PC-3 (cell line): ENCODE measurements at regions of chr11 and their contacts with region 1.

Region 1: DNA sequence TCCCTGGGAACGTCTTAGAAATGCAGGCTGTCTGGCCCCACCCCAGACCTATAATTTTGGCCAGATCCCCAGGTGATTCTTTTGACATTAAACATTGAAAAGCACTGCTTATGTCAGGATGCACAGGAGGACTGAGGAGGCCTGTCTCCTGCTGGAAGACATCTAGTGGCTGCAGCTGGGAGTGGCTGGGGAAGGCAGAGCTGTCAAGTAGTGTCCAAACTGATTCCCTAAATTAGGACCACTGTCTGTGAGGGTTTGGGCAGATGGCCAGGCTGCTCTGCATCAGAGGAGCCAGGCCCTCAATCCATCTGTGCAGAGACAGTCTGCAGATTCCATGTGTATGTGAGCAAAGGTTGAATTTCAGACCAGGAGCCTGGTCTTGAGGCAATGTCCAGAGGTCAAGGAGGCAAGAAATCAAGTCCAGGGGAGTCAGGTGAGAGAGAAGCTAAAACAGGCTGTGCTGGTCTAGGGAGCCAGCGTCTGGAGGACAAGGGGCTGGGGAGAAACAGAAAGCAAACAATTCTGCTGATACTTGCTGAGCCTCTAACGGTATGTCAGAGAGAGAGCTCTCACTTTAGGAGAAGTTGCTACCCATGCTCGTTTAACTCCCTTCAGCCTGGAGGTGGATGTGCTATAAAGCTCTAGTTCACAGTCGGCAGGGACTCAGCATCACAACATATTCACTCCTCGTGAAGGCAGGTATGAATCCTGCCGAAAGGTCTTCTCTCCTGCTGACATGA is 15.3 kb upstream of the SYTL2 start:
- DNase-seq: peak; percentile 78
- ATAC-seq: peak; percentile 14; the same call in 1 of the 2 replicates
- H3K4me3 ChIP-seq: no peak overlapping the region
- H3K27ac ChIP-seq: peak overlapping the region; percentile 96
- H3K4me1 ChIP-seq: peaks cover 74% of the 10 kb centered on the region
- H3K27me3 ChIP-seq: no peaks in the 10 kb centered on the region
- CTCF ChIP-seq: peak; percentile 93

Region 2: GRCh38 chr11:85664615-85665481 is 161.4 kb before region 1 on chr11 and contains the start of gene CREBZF:
- CTCF ChIA-PET with region 1: no interaction called
- POLR2A ChIA-PET with region 1: no interaction called
- intact Hi-C with region 1: loop called (anchors 1 kb)
- DNase-seq: peak; percentile 98
- ATAC-seq: peak; percentile 89
- H3K4me3 ChIP-seq: peak within 1 kb of the TSS; percentile 98
- H3K27ac ChIP-seq: peak within 1 kb of the TSS; percentile 91
- H3K4me1 ChIP-seq: peaks cover 23% of the 10 kb centered on the region
- H3K27me3 ChIP-seq: no peaks in the 10 kb centered on the region
- CTCF ChIP-seq: no peak
- total RNA-seq, gene CREBZF: 75.0 and 114 TPM in 2 replicates

Region 3: DNA sequence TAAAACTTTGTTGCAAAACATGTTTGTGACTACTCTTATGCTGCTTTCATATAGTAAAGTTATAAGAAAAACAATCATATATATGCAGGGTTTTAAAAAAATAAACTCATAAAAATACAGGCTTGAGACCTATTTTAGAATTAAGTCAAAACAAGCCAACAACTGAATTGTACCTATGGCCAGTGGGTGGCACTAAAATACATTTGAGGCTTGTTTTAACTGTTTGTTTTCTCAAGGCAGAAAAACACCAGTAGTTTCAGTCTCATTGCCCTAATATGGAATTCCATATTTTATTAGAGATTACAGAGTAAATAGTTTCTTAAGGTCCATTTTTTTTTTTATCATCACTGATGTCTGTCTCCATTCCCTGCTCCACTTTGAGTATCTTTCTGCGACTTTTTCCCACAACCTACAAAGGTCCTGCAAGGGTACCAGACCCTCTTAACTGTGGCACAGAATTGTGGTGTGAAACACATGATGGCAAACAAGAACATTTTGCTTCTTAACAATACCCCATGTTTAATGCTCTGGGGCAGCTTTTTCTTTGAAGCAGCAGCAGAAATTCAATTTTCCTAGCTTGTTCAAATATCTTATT is 131.8 kb before region 1 on chr11:
- CTCF ChIA-PET with region 1: interaction called, 4 read pairs
- POLR2A ChIA-PET with region 1: no interaction called
- intact Hi-C with region 1: loop called (anchors 1 kb)
- DNase-seq: peak; percentile 87
- ATAC-seq: peak; percentile 59
- H3K4me3 ChIP-seq: no peak overlapping the region
- H3K27ac ChIP-seq: peak overlapping the region; percentile 10; the same call in 1 of the 2 replicates
- H3K4me1 ChIP-seq: peaks cover 34% of the 10 kb centered on the region
- H3K27me3 ChIP-seq: no peaks in the 10 kb centered on the region
- CTCF ChIP-seq: peak; percentile 94

Region 4: GRCh38 chr11:85740481-85741400 is 85.5 kb before region 1 on chr11:
- CTCF ChIA-PET with region 1: no interaction called
- POLR2A ChIA-PET with region 1: interaction called, 5 read pairs
- intact Hi-C with region 1: loop called (anchors 1 kb)
- DNase-seq: peak; percentile 22
- ATAC-seq: no peak; the same call in 1 of the 2 replicates
- H3K4me3 ChIP-seq: no peak overlapping the region
- H3K27ac ChIP-seq: 0 out of 2 replicates have a peak overlapping the region, but pooled peaks have one; percentile 92
- H3K4me1 ChIP-seq: peaks cover 59% of the 10 kb centered on the region
- H3K27me3 ChIP-seq: no peaks in the 10 kb centered on the region
- CTCF ChIP-seq: no peak

Region 5: GRCh38 chr11:85810871-85811611 is 15.2 kb before region 1 on chr11 and contains the start of gene SYTL2:
- CTCF ChIA-PET with region 1: interaction called, 4 read pairs
- POLR2A ChIA-PET with region 1: no interaction called
- intact Hi-C with region 1: loop called (anchors 2 kb)
- DNase-seq: peak; percentile 85
- ATAC-seq: peak; percentile 67
- H3K4me3 ChIP-seq: peak within 1 kb of the TSS; percentile 77
- H3K27ac ChIP-seq: peak within 1 kb of the TSS; percentile 20
- H3K4me1 ChIP-seq: peaks cover 61% of the 10 kb centered on the region
- H3K27me3 ChIP-seq: no peaks in the 10 kb centered on the region
- CTCF ChIP-seq: no peak
- total RNA-seq, gene SYTL2: 51.7 and 57.1 TPM in 2 replicates

Region 6: DNA sequence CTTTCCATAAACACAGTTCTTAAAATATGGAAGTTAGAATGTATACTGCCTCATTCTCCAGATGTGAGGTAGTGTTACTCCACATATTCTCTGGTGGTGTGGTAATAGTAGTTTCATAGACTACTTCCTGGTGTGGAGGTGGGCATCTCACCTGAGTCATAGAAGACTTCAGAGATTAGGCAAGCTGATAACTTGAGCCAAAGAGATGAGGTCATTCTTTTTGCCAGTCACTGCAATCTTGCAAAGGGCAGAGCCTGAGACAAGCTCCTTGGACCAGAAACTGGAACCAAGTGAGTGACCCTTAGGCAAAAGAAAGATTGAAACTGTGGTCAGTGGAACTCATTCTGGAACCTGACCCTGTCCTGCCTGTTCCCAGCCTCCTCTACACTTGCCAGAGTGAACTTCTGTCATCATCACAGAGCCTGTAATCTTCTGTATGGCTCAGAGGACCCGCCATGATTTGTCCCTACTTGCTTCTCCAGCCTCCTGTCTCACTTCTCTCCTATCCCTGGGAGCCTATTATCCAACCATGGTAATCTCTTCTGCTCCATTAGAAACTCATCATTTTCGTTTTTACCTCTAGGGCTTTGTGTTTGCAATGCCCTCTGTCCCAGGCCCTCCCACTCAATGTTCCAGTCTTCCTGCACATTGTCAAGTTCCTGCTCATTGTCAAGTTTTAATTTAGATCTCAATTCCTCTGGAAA is 18.3 kb after region 1 on chr11:
- CTCF ChIA-PET with region 1: interaction called, 4 read pairs
- POLR2A ChIA-PET with region 1: no interaction called
- intact Hi-C with region 1: loop called (anchors 2 kb)
- DNase-seq: peak; percentile 95
- ATAC-seq: peak; percentile 83
- H3K4me3 ChIP-seq: no peak overlapping the region
- H3K27ac ChIP-seq: peak overlapping the region; percentile 84
- H3K4me1 ChIP-seq: peaks cover 36% of the 10 kb centered on the region
- H3K27me3 ChIP-seq: no peaks in the 10 kb centered on the region
- CTCF ChIP-seq: no peak

Region 7: DNA sequence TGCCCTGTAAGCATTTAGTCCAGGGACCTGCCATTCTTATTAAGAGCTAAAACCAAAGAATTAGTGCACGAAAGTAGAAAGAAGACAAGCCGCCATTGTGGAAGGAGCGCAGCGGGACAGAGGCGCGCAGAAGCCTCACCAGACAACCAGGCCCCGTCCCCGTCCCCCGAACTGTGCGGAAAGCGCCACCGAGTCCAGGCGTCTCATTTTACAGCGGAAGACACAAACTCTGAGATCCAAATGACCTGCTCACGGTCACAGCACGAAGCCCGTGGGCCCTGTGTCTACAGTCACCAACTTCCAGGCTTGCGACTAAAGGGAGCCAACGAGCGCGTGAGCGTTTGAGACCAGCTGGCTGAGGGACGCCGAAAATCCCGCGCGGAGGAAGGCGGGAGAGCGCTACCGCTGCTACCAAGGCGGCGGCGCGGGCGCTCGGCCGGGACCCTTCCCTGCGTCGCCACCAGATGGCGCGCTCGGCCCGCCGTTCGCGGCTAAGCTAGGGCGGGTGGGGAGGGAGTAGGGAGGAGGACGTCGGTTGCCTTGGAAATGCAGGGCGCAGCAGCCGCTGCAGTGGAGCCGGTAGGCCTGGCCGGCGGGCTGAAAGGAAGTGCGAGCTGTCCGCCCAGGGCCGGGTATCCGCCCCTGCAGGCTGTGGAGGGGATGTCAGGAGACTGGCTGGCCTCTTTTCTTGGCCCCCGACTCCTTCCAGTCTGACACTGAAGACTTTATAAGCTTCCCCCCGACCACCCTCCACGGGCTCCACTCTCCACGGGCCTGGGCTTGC is 28.5 kb after region 1 on chr11:
- CTCF ChIA-PET with region 1: interaction called, 3 read pairs
- POLR2A ChIA-PET with region 1: interaction called, 3 read pairs
- intact Hi-C with region 1: loop called (anchors 2 kb)
- DNase-seq: peak; percentile 99
- ATAC-seq: peak; percentile 94
- H3K4me3 ChIP-seq: peak overlapping the region; percentile 78
- H3K27ac ChIP-seq: peak overlapping the region; percentile 84
- H3K4me1 ChIP-seq: peaks cover 17% of the 10 kb centered on the region
- H3K27me3 ChIP-seq: no peaks in the 10 kb centered on the region
- CTCF ChIP-seq: peak; percentile 68